SK-N-SH (cell line): ENCODE measurements at regions of chr19 and their contacts with region 1.

Region 1: DNA sequence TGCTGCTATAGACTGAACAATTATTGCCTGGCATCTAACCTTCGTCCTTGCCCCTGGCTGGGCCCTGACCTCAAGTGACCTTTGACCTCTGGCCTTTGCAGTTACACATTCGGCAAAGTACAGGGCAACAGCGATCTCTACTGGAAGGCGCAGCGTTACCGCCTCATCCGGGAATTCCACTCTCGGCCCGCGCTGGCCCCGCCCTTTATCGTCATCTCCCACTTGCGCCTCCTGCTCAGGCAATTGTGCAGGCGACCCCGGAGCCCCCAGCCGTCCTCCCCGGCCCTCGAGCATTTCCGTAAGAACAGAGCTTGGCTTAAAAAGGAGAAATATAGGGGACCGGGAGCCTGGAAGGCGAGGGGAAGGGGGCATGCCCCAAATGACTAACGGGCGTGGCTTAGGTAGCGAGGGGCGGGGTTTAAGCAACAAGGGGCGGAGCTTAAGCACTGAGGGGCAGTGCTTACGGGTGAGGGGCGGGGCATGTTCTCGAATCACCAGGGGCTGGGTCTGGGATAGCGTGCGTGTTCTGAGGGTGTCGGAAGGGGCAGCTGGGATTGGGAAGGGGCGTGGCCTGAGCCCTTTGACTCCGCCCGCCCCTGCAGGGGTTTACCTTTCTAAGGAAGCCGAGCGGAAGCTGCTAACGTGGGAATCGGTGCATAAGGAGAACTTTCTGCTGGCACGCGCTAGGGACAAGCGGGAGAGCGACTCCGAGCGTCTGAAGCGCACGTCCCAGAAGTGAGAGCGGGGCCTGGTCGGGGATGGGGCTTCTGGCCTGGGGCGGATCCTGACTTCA is 52.7 kb downstream of the TRPM4 start:
- DNase-seq: peak; percentile 69
- H3K4me3 ChIP-seq: no peak overlapping the region; a peak in 1 of 4 replicates
- H3K27ac ChIP-seq: no peak overlapping the region
- H3K4me1 ChIP-seq: no peaks in the 10 kb centered on the region; a peak in 1 of 4 replicates
- H3K27me3 ChIP-seq: no peaks in the 10 kb centered on the region
- CTCF ChIP-seq: no peak
- EP300 ChIP-seq: no peak
- RAD21 ChIP-seq: no peak

Region 2: GRCh38 chr19:49182848-49183344 is 27.4 kb before region 1 on chr19:
- CTCF ChIA-PET with region 1: interaction called, 10 read pairs
- POLR2A ChIA-PET with region 1: no interaction called
- DNase-seq: no peak
- H3K4me3 ChIP-seq: no peak overlapping the region
- H3K27ac ChIP-seq: no peak overlapping the region
- H3K4me1 ChIP-seq: no peaks in the 10 kb centered on the region
- H3K27me3 ChIP-seq: no peaks in the 10 kb centered on the region
- CTCF ChIP-seq: no peak
- EP300 ChIP-seq: no peak
- RAD21 ChIP-seq: no peak

Region 3: GRCh38 chr19:49249933-49250332 is 39.6 kb after region 1 on chr19:
- CTCF ChIA-PET with region 1: no interaction called
- POLR2A ChIA-PET with region 1: no interaction called
- DNase-seq: no peak
- H3K4me3 ChIP-seq: no peak overlapping the region
- H3K27ac ChIP-seq: no peak overlapping the region
- H3K4me1 ChIP-seq: no peaks in the 10 kb centered on the region
- H3K27me3 ChIP-seq: peaks cover 62% of the 10 kb centered on the region
- CTCF ChIP-seq: no peak
- EP300 ChIP-seq: no peak
- RAD21 ChIP-seq: no peak